Naive thymus-derived CD4-positive, alpha-beta T cell (primary cell): ENCODE measurements at regions of chr19 and their contacts with region 1.

Region 1: GRCh38 chr19:17390665-17391370 is 3.2 kb downstream of the CCDC194 start:
- DNase-seq: peak; percentile 77 to 93 (median 85)
- ATAC-seq: peak; percentile 100
- H3K4me3 ChIP-seq: peak overlapping the region; percentile 84
- H3K4me3 Mint-ChIP-seq: peak overlapping the region; percentile 85 to 98 (median 92)
- H3K27ac ChIP-seq: peak overlapping the region; percentile 2
- H3K27ac Mint-ChIP-seq: peak overlapping the region in 5 of 9 donors; percentile 28 to 92 (median 61)
- H3K4me1 ChIP-seq: peaks cover 15 to 18% of the 10 kb centered on the region in 2 donors
- H3K4me1 Mint-ChIP-seq: peaks cover 6 to 30% (median 20%) of the 10 kb centered on the region in 7 donors
- H3K27me3 ChIP-seq: no peaks in the 10 kb centered on the region
- H3K27me3 Mint-ChIP-seq: peaks cover 0 to 28% (median 0%) of the 10 kb centered on the region in 5 donors

Region 2: DNA sequence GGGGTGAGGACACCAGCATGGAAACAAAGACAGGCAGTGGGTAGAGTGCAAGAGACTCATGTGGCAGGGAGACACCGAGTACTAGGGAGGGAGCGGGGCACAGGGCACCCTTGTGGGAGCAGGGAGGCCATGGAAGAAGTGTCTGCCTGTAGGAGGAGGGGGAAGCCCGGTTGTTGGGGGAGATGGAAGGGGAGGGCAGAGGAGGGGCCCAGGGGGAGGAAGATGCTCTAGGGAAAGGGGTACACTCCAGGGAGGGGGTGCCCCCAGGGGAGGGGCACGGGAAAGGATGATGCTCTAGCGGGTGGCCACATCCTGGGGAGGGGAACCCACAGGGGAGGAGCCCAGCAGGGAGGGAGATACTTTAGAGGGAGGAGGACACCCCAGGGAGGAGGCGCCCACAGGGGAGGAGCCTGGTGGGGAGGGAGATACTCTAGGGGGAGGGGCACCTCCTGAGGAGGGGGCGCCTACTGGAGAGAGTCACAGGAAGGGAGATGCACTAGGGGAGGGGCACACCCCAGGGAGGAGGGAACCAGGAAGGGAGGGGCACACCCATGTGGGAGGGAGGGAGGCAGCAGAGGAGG is 389.1 kb before region 1 on chr19:
- CTCF ChIA-PET with region 1: no interaction called
- POLR2A ChIA-PET with region 1: no interaction called
- intact Hi-C with region 1: no loop called
- DNase-seq: peak; percentile 53 to 96 (median 91)
- ATAC-seq: peak; percentile 99
- H3K4me3 ChIP-seq: peak overlapping the region; percentile 43
- H3K4me3 Mint-ChIP-seq: peak overlapping the region; percentile 66 to 81 (median 76)
- H3K27ac ChIP-seq: peak overlapping the region; percentile 64
- H3K27ac Mint-ChIP-seq: peak overlapping the region; percentile 73 to 95 (median 92)
- H3K4me1 ChIP-seq: peaks cover 21% of the 10 kb centered on the region in 2 donors
- H3K4me1 Mint-ChIP-seq: peaks cover 8 to 35% (median 22%) of the 10 kb centered on the region in 7 donors
- H3K27me3 ChIP-seq: no peaks in the 10 kb centered on the region
- H3K27me3 Mint-ChIP-seq: peaks cover 0 to 3% (median 0%) of the 10 kb centered on the region in 5 donors

Region 3: GRCh38 chr19:17292286-17293097 is 98.3 kb before region 1 on chr19:
- CTCF ChIA-PET with region 1: interaction called, 31 read pairs
- POLR2A ChIA-PET with region 1: interaction called, 4 read pairs
- intact Hi-C with region 1: loop called (anchors 1 kb)
- DNase-seq: peak; percentile 71 to 88 (median 79)
- ATAC-seq: peak; percentile 97
- H3K4me3 ChIP-seq: peak overlapping the region; percentile 80
- H3K4me3 Mint-ChIP-seq: peak overlapping the region; percentile 83 to 93 (median 92)
- H3K27ac ChIP-seq: peak overlapping the region; percentile 55
- H3K27ac Mint-ChIP-seq: peak overlapping the region; percentile 33 to 87 (median 77)
- H3K4me1 ChIP-seq: peaks cover 0 to 5% of the 10 kb centered on the region in 2 donors
- H3K4me1 Mint-ChIP-seq: peaks cover 0 to 7% (median 5%) of the 10 kb centered on the region in 7 donors
- H3K27me3 ChIP-seq: no peaks in the 10 kb centered on the region
- H3K27me3 Mint-ChIP-seq: peaks cover 0 to 5% (median 0%) of the 10 kb centered on the region in 5 donors

Region 4: DNA sequence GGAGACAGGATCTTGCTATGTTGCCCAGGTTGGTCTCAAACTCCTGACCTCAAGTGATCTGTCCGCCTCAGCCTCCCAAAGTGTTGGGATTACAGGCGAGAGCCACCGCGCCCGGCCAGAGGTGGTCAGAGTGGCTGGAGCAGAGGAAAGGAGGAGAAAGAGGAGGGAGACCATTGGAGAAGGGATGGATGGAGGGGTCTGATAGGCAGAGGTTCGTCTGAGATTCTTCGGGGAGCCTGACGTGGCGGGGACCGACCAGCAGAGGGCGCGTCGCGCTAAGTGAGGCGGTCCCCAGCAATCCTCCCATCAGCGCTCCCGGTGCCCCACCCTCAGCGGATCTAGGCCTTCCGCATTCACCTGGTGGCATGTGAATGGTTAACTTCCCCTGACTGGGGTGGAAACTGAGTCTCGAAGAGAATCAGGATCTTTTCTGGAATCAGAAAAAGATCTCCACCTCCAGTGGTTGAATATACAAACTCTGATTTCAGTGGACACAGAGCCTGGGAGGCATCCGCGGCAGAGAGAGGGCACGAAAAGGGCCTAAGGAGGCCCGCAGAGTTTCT is 44.6 kb before region 1 on chr19:
- CTCF ChIA-PET with region 1: interaction called, 18 read pairs
- POLR2A ChIA-PET with region 1: interaction called, 3 read pairs
- intact Hi-C with region 1: loop called (anchors 1 kb)
- DNase-seq: peak; percentile 46 to 85 (median 71)
- ATAC-seq: peak; percentile 98
- H3K4me3 ChIP-seq: no peak overlapping the region
- H3K4me3 Mint-ChIP-seq: no peak overlapping the region
- H3K27ac ChIP-seq: no peak overlapping the region
- H3K27ac Mint-ChIP-seq: peak overlapping the region in 2 of 9 donors; percentile 13 to 46
- H3K4me1 ChIP-seq: peaks cover 0 to 5% of the 10 kb centered on the region in 2 donors
- H3K4me1 Mint-ChIP-seq: peaks cover 0 to 15% (median 6%) of the 10 kb centered on the region in 7 donors
- H3K27me3 ChIP-seq: peaks cover 0 to 2% of the 10 kb centered on the region in 2 donors
- H3K27me3 Mint-ChIP-seq: peaks cover 4 to 19% (median 7%) of the 10 kb centered on the region in 5 donors

Region 5: GRCh38 chr19:17419621-17420466 is 29.0 kb after region 1 on chr19 and contains the start of gene MVB12A:
- CTCF ChIA-PET with region 1: interaction called, 5 read pairs
- POLR2A ChIA-PET with region 1: no interaction called
- intact Hi-C with region 1: loop called in 1 of 2 experiments (anchors 1 kb)
- DNase-seq: peak; percentile 85 to 98 (median 96)
- ATAC-seq: peak; percentile 99
- H3K4me3 ChIP-seq: peak within 1 kb of the TSS; percentile 79
- H3K4me3 Mint-ChIP-seq: peak within 1 kb of the TSS; percentile 87 to 95 (median 91)
- H3K27ac ChIP-seq: peak within 1 kb of the TSS; percentile 70
- H3K27ac Mint-ChIP-seq: peak within 1 kb of the TSS; percentile 73 to 93 (median 89)
- H3K4me1 ChIP-seq: peaks cover 12 to 15% of the 10 kb centered on the region in 2 donors
- H3K4me1 Mint-ChIP-seq: peaks cover 4 to 28% (median 19%) of the 10 kb centered on the region in 7 donors
- H3K27me3 ChIP-seq: no peaks in the 10 kb centered on the region
- H3K27me3 Mint-ChIP-seq: no peaks in the 10 kb centered on the region
- total RNA-seq, gene MVB12A: 19.5 to 45.1 (median 33.3) TPM